Common myeloid progenitor, CD34-positive (primary cell): ENCODE measurements at regions of chr22 and their contacts with region 1.

Region 1: DNA sequence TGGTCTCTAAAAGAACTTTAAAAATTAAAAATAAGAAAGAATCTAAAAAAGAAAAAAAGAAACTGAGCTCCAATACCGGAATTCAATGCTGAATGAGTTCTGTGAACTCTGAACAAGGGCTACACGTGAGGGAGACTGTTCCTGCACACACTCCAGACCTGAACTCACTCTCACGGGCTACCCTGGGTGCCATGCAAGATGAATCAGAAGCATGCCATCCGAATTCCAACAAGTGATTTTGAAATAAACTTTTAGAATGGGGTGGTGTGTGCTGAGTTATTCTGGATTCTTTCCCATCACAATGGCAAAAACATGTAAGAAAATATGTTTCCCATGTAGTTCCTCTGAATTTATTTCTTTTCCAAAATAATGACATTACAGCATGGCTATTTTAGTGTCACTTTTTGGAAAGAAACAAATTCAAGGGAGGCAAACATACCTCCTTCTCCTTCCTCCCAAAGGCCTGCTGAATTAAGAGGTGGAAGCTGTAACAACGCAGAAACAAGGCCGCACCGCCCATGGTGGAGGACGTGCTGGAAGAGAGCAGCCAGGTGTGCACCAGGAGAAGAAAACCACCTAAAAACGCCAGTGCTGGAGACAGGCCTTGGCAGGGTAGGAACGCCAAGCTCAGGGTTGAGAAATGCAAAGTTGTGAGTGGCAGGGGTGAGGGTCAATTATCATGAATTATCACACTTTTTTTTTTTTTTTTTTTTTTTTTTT is 63.2 kb upstream of the ARFGAP3 start:
- DNase-seq: no peak
- H3K4me3 ChIP-seq: no peak overlapping the region
- H3K27ac ChIP-seq: no peak overlapping the region
- H3K4me1 ChIP-seq: peaks cover 20 to 86% (median 62%) of the 10 kb centered on the region in 4 experiments
- H3K27me3 ChIP-seq: no peaks in the 10 kb centered on the region

Region 2: DNA sequence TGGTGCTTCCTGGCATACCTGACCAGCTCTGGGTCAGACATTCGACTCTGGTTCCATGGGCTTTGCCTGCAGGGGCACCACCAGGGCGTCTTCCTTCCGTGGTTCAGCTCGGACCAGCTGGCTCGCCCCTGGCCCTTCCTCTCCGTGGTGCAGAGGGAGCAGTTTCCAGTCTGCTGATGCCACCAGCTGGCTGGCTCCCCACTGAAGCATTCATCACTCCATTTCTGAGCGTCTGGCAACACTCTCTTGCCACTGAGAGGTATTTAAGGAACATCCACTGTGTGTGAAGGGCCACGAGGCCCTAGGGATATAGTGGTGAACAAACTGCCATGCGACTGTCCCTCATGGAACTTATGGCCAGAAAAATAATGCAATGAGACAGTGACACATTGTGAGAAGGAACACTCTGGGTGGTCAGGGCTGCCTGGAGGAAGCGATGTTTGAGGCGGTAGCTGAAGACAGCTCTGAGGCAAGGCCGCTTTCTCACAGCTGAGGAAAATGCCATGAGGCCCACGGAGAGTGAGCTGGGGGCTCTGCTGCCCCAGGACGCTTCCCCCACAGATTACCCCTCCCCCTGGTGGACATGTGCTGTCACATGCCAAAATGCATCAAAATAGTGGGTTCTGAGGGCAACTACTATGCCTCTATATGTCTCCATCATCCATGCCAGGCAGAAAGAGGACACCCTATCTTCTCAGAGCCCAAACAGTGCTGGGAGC is 18.3 kb before region 1 on chr22:
- CTCF ChIA-PET with region 1: interaction called, 13 read pairs
- POLR2A ChIA-PET with region 1: no interaction called
- DNase-seq: peak in 2 of 3 donors; percentile 52 to 55
- H3K4me3 ChIP-seq: no peak overlapping the region
- H3K27ac ChIP-seq: no peak overlapping the region
- H3K4me1 ChIP-seq: peaks cover 0 to 21% (median 10%) of the 10 kb centered on the region in 4 experiments
- H3K27me3 ChIP-seq: no peaks in the 10 kb centered on the region